HepG2 (cell line): ENCODE measurements at regions of chr1 and their contacts with region 1.

Region 1: GRCh38 chr1:29332204-29332603 is 95.9 kb downstream of the PTPRU start:
- DNase-seq: peak; percentile 59
- ATAC-seq: peak; percentile 81
- H3K4me3 ChIP-seq: no peak overlapping the region
- H3K27ac ChIP-seq: no peak overlapping the region
- H3K4me1 ChIP-seq: no peaks in the 10 kb centered on the region; the same call in 1 of the 2 replicates
- H3K27me3 ChIP-seq: no peaks in the 10 kb centered on the region
- CTCF ChIP-seq: peak; percentile 85
- EP300 ChIP-seq: no peak
- POLR2A ChIP-seq: no peak
- RAD21 ChIP-seq: 0 out of 2 replicates have a peak, but pooled peaks have one; percentile 34

Region 2: GRCh38 chr1:30111431-30111830 is 779.2 kb after region 1 on chr1:
- CTCF ChIA-PET with region 1: no interaction called
- POLR2A ChIA-PET with region 1: no interaction called
- in situ Hi-C with region 1: loop called (anchors 25 kb)
- intact Hi-C with region 1: no loop called
- DNase-seq: peak; percentile 5
- ATAC-seq: peak; percentile 81
- H3K4me3 ChIP-seq: no peak overlapping the region
- H3K27ac ChIP-seq: no peak overlapping the region
- H3K4me1 ChIP-seq: no peaks in the 10 kb centered on the region
- H3K27me3 ChIP-seq: peaks cover 0 to 12% of the 10 kb centered on the region in 2 experiments; a peak in 3 of 5 replicates
- CTCF ChIP-seq: peak; percentile 71
- EP300 ChIP-seq: no peak
- POLR2A ChIP-seq: no peak
- RAD21 ChIP-seq: 0 out of 2 replicates have a peak, but pooled peaks have one; percentile 26

Region 3: GRCh38 chr1:30684881-30685795 is 1352.9 kb after region 1 on chr1:
- CTCF ChIA-PET with region 1: no interaction called
- POLR2A ChIA-PET with region 1: no interaction called
- in situ Hi-C with region 1: loop called (anchors 25 kb)
- intact Hi-C with region 1: no loop called
- DNase-seq: peak; percentile 78
- ATAC-seq: peak; percentile 98
- H3K4me3 ChIP-seq: peak overlapping the region in 2 of 3 experiments; percentile 35 to 53; a peak in 4 of 6 replicates
- H3K27ac ChIP-seq: no peak overlapping the region
- H3K4me1 ChIP-seq: peaks cover 6% of the 10 kb centered on the region; the same call in 1 of the 2 replicates
- H3K27me3 ChIP-seq: peaks cover 1 to 2% of the 10 kb centered on the region in 2 experiments; a peak in 2 of 5 replicates
- CTCF ChIP-seq: peak; percentile 53
- EP300 ChIP-seq: no peak
- POLR2A ChIP-seq: 0 out of 4 replicates have a peak, but pooled peaks of 1 of the 2 experiments have one; percentile 50
- RAD21 ChIP-seq: no peak